ENCODE measurements at regions of chr16 and their contacts with region 1.

Region 1: DNA sequence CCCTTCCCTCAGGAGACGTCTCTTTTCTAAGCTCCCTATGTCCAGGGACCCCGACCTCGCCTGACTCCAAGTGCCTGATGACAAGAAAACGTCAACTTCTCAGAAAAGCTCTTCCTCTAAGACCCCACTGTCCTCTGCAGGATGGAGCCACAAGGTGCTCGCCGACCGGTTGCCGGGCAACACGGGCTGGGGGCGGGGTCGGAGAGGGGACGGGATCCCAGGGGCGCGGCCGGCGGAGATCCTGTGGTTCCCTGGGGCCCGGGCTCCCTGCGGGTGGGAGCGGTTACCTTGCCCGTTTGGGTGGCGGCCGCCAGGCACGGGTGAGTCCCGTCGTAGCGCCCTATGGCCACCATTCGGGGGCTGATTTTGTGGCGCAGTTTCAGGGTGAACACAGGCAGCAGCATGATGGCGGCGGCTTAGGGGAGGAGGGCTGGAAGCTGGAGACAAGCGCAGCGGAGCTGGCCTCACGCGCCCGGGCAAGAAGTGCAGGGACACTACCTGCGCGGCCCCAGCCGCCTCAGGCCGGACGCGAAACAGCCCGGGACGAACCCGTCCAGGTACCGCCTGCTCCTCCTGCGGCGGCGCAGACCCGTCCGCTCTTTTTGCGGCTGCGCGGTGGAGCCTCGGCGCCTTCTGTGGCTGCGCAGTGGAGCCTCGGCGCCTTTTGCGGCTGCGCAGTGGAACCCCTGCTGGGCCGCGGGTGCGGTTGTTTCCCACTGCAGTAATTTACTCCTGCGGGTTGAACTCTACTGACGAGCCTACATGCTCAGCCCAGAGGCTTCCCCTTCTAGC is at the start of gene BBS2:
- DNase-seq: peak; percentile 93 to 95
- ATAC-seq: peak; percentile 93 to 96 (median 94)
- H3K4me3 ChIP-seq: peak within 1 kb of the TSS; percentile 98
- H3K27ac ChIP-seq: peak within 1 kb of the TSS; percentile 87
- H3K4me1 ChIP-seq: peaks cover 22% of the 10 kb centered on the region
- H3K27me3 ChIP-seq: no peaks in the 10 kb centered on the region
- CTCF ChIP-seq: no peak
- total RNA-seq, gene BBS2: 29.1 to 70.6 (median 39.9) TPM

Region 2: DNA sequence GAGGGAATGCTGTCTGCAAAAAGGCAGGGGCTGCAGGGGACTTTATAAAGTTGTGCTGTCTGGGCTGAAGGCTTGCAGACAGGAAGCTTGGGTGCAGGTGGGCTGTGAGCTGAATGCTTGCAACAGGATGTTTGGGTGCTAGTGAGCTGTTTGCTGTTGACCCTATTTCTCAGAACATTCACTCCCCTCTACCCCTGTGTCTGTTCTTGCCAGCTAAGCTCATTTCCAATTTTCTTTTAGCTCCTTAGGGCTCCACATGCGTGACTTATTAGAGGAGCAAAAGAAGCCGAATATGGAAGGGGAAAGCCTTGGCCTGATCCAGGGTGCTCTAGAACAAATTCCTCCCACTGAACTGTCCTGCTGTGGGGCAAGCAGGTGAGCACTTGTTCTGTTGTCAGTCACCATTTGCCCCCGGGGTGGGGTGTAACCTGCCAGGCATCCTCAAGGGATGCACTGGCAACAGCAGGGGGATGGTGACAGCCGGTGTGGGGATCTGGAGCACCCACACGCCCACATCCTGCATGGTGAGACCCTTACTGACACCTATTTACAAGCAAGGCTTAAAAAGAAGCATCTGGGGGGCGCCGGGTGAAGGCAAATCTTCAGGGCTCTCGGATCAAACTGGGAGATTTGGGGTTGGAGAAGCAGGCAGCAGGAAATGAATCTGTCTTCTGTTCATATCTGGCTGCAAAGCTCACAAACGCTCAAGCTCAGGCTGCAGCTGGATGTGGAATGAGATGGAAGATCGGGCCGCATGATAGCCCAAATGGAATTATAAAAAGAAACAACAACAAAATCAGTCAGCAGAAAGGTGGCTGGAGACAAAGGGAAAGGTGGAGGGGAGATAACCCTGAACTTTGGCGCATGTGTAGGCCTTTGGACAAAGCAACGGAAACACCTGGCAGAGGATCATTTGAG is 189.1 kb after region 1 on chr16:
- intact Hi-C with region 1: loop called (anchors 5 to 10 kb)
- DNase-seq: no peak
- ATAC-seq: no peak
- H3K4me3 ChIP-seq: no peak overlapping the region
- H3K27ac ChIP-seq: no peak overlapping the region
- H3K4me1 ChIP-seq: no peaks in the 10 kb centered on the region
- H3K27me3 ChIP-seq: no peaks in the 10 kb centered on the region
- CTCF ChIP-seq: no peak

Measured in psoas muscle (tissue), 8 donors.